ENCODE measurements at regions of chr11 and their contacts with region 1.

Region 1: GRCh38 chr11:46616998-46617675 is at the starts of genes ATG13 and HARBI1:
- DNase-seq: peak; percentile 68 to 77
- ATAC-seq: peak; percentile 92 to 94
- H3K4me3 ChIP-seq: peak within 1 kb of the TSS; percentile 81 to 100 (median 93)
- H3K27ac ChIP-seq: peak within 1 kb of the TSS; percentile 92 to 99 (median 96)
- H3K4me1 ChIP-seq: peaks cover 23 to 25% of the 10 kb centered on the region in 2 donors
- H3K27me3 ChIP-seq: no peaks in the 10 kb centered on the region
- CTCF ChIP-seq: no peak
- POLR2A ChIP-seq: peak; percentile 80 to 85
- total RNA-seq, gene ATG13: 33.4 to 76.0 (median 67.0) TPM
- total RNA-seq, gene HARBI1: 1.2 to 6.9 (median 3.3) TPM

Region 2: GRCh38 chr11:46392421-46393230 is 224.5 kb before region 1 on chr11:
- in situ Hi-C with region 1: no loop called
- intact Hi-C with region 1: loop called (anchors 2 kb)
- DNase-seq: peak; percentile 54 to 78
- ATAC-seq: peak; percentile 80 to 87
- H3K4me3 ChIP-seq: peak overlapping the region; percentile 23 to 47 (median 36)
- H3K27ac ChIP-seq: no peak overlapping the region
- H3K4me1 ChIP-seq: peaks cover 19 to 23% of the 10 kb centered on the region in 2 donors
- H3K27me3 ChIP-seq: peaks cover 35 to 36% (median 36%) of the 10 kb centered on the region in 3 donors
- CTCF ChIP-seq: no peak
- POLR2A ChIP-seq: no peak

Region 3: DNA sequence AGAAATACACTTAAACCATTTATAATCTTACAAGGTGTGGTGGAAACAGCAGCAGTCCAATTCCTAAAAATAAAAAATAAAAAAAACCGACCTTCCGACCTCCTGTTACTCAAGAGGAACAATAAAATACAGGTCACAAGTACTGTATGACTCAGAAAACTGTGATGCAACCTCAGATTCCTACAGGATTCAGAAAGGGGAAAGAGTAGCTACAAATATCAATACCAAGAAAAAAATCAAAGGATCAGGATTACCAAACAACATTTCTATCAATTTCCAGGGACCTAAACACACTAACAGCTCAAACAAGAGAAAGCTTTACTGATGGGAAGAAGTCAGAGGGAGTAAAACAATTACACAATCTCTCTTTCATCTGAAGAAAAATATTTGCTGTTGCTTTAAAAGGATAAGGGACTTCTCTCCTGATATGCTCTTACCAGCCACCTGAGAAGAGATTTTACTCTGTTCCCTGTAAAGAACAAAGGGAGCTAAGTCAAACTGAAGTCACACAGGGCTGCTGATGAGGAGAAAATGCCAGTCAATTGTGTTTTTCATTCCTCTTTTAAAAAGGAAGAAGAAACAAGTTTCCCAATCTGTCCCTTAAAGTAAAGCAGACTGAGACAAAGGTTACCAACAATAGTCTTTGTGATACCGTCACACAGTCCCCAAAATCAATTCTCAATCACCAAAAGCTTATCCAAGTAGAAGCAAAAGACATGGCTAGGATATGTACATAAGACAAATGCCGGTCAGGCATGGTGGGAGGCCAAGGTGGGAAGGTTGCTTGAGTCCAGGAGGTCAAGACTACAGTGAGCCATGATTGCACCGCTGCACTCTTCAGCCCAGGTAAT is 62.7 kb before region 1 on chr11:
- in situ Hi-C with region 1: no loop called
- intact Hi-C with region 1: loop called (anchors 2 kb)
- DNase-seq: peak in 1 of 2 donors; percentile 20
- ATAC-seq: peak; percentile 97
- H3K4me3 ChIP-seq: peak overlapping the region in 1 of 4 donors; percentile 37
- H3K27ac ChIP-seq: peak overlapping the region; percentile 79 to 90 (median 84)
- H3K4me1 ChIP-seq: peaks cover 32 to 36% of the 10 kb centered on the region in 2 donors
- H3K27me3 ChIP-seq: no peaks in the 10 kb centered on the region
- CTCF ChIP-seq: no peak
- POLR2A ChIP-seq: no peak

Region 4: DNA sequence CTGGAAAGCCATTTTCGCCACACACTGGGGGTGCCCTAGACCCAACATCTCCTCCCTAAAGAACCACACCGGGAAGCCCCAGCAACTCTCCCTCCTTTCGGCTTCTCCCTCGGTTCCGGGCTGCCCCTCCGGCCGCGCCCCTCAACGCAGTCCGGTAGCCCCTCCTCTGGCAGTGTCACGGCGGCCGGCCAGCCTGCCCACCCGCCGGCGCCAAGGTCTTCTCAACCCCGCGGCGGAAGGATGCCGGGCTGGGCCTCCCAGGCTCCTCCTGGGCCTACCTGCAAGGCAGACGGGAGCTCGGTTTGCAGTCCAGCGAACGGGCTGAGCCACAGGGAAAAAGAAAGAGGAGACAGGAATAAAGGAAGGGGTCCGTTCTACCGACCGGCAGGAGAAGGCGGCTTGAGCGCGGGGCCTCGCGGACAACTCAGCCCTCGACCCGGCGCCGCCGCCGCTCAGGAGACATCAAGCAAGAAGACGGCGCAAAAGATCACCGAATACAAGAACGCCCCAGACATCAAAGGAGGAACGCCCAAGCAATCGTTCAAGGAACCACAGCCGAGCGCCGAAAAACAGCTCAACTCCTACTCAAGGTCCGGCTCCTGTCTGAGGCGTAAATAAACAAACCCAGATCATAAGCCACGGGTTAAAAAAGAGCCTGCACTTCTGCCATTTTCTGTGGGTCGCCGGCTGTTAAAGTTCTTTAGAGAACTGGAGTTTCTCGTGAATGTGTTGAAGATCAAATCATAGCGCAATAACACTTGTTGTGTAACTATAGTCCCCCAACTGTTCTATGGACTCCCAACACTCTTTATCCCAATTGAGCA is 23.4 kb before region 1 on chr11 and contains the start of gene AMBRA1:
- in situ Hi-C with region 1: no loop called
- intact Hi-C with region 1: loop called (anchors 1 kb)
- DNase-seq: peak; percentile 82 to 87
- ATAC-seq: peak; percentile 95 to 98
- H3K4me3 ChIP-seq: peak within 1 kb of the TSS; percentile 85 to 95 (median 90)
- H3K27ac ChIP-seq: peak within 1 kb of the TSS; percentile 75 to 93 (median 85)
- H3K4me1 ChIP-seq: peaks cover 28 to 32% of the 10 kb centered on the region in 2 donors
- H3K27me3 ChIP-seq: no peaks in the 10 kb centered on the region
- CTCF ChIP-seq: no peak
- POLR2A ChIP-seq: peak; percentile 47 to 57
- total RNA-seq, gene AMBRA1: 17.3 to 24.3 (median 20.7) TPM

Measured in gastrocnemius medialis (tissue), 4 donors.